ENCODE measurements at regions of chr6 and their contacts with region 1.

Region 1: GRCh38 chr6:46419576-46420002 is 71.7 kb downstream of the RCAN2 start:
- DNase-seq: peak; percentile 81
- H3K4me3 ChIP-seq: no peak overlapping the region
- H3K27ac ChIP-seq: no peak overlapping the region
- H3K4me1 ChIP-seq: no peaks in the 10 kb centered on the region
- H3K27me3 ChIP-seq: no peaks in the 10 kb centered on the region
- CTCF ChIP-seq: peak; percentile 67 to 77 (median 67)
- POLR2A ChIP-seq: no peak

Region 2: GRCh38 chr6:45830441-45831139 is 589.0 kb before region 1 on chr6:
- intact Hi-C with region 1: no loop called
- DNase-seq: no peak
- H3K4me3 ChIP-seq: no peak overlapping the region
- H3K27ac ChIP-seq: no peak overlapping the region
- H3K4me1 ChIP-seq: no peaks in the 10 kb centered on the region
- H3K27me3 ChIP-seq: no peaks in the 10 kb centered on the region
- CTCF ChIP-seq: no peak
- POLR2A ChIP-seq: no peak

Region 3: GRCh38 chr6:45922728-45923351 is 496.7 kb before region 1 on chr6:
- intact Hi-C with region 1: loop called (anchors 10 kb)
- DNase-seq: peak; percentile 83
- H3K4me3 ChIP-seq: no peak overlapping the region
- H3K27ac ChIP-seq: no peak overlapping the region
- H3K4me1 ChIP-seq: no peaks in the 10 kb centered on the region
- H3K27me3 ChIP-seq: no peaks in the 10 kb centered on the region
- CTCF ChIP-seq: peak; percentile 53 to 70 (median 64)
- POLR2A ChIP-seq: no peak

Region 4: GRCh38 chr6:46080111-46080510 is 339.5 kb before region 1 on chr6:
- intact Hi-C with region 1: loop called (anchors 10 kb)
- DNase-seq: no peak
- H3K4me3 ChIP-seq: no peak overlapping the region
- H3K27ac ChIP-seq: no peak overlapping the region
- H3K4me1 ChIP-seq: no peaks in the 10 kb centered on the region
- H3K27me3 ChIP-seq: no peaks in the 10 kb centered on the region
- CTCF ChIP-seq: no peak
- POLR2A ChIP-seq: no peak

Region 5: GRCh38 chr6:46221222-46221793 is 198.3 kb before region 1 on chr6:
- intact Hi-C with region 1: loop called (anchors 10 kb)
- DNase-seq: no peak
- H3K4me3 ChIP-seq: no peak overlapping the region
- H3K27ac ChIP-seq: peak overlapping the region in 1 of 2 donors; percentile 78
- H3K4me1 ChIP-seq: peaks cover 22% of the 10 kb centered on the region
- H3K27me3 ChIP-seq: no peaks in the 10 kb centered on the region
- CTCF ChIP-seq: peak; percentile 83 to 87 (median 86)
- POLR2A ChIP-seq: no peak

Region 6: GRCh38 chr6:46325561-46326530 is 93.7 kb before region 1 on chr6:
- intact Hi-C with region 1: no loop called
- DNase-seq: no peak
- H3K4me3 ChIP-seq: no peak overlapping the region
- H3K27ac ChIP-seq: no peak overlapping the region
- H3K4me1 ChIP-seq: peaks cover 29% of the 10 kb centered on the region
- H3K27me3 ChIP-seq: no peaks in the 10 kb centered on the region
- CTCF ChIP-seq: no peak
- POLR2A ChIP-seq: no peak

Region 7: DNA sequence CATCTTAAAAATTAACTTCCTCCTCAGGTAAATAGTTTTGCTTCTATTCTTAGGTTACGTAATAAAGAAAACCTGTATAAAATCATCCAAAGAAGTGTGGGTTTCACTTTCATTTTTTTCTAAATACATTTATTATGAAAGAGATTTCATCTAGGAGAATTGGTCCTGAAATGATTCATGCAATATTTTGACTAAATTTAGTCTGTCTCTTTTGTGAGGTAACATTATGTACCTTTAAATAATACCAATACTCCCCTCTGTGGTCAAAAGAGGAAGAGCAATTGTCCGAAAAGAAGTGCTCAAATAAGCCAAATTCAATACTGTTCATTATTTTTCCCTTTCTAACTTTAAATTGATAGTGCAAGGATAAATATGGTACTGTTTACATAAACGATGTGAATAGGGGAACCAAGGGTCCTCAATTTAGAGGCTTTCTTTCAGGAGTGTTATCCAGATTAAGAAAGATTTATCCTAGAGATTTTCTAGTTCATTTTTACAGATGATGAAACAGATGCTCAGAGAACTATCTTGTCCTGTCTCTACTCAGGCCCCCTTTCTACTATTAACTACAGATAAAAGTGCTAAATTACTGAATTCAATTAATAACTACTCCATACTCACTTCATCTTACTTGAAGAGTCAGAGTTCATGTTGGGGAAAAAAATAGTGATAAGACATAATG is 206.8 kb after region 1 on chr6:
- intact Hi-C with region 1: loop called (anchors 10 kb)
- DNase-seq: no peak
- H3K4me3 ChIP-seq: no peak overlapping the region
- H3K27ac ChIP-seq: no peak overlapping the region
- H3K4me1 ChIP-seq: peaks cover 12% of the 10 kb centered on the region
- H3K27me3 ChIP-seq: no peaks in the 10 kb centered on the region
- CTCF ChIP-seq: peak; percentile 52 to 58 (median 53)
- POLR2A ChIP-seq: no peak

Region 8: GRCh38 chr6:47203266-47203937 is 783.8 kb after region 1 on chr6:
- intact Hi-C with region 1: no loop called
- DNase-seq: no peak
- H3K4me3 ChIP-seq: no peak overlapping the region
- H3K27ac ChIP-seq: no peak overlapping the region
- H3K4me1 ChIP-seq: no peaks in the 10 kb centered on the region
- H3K27me3 ChIP-seq: no peaks in the 10 kb centered on the region
- CTCF ChIP-seq: no peak
- POLR2A ChIP-seq: no peak